ENCODE measurements at regions of chr19 and their contacts with region 1.

Region 1: DNA sequence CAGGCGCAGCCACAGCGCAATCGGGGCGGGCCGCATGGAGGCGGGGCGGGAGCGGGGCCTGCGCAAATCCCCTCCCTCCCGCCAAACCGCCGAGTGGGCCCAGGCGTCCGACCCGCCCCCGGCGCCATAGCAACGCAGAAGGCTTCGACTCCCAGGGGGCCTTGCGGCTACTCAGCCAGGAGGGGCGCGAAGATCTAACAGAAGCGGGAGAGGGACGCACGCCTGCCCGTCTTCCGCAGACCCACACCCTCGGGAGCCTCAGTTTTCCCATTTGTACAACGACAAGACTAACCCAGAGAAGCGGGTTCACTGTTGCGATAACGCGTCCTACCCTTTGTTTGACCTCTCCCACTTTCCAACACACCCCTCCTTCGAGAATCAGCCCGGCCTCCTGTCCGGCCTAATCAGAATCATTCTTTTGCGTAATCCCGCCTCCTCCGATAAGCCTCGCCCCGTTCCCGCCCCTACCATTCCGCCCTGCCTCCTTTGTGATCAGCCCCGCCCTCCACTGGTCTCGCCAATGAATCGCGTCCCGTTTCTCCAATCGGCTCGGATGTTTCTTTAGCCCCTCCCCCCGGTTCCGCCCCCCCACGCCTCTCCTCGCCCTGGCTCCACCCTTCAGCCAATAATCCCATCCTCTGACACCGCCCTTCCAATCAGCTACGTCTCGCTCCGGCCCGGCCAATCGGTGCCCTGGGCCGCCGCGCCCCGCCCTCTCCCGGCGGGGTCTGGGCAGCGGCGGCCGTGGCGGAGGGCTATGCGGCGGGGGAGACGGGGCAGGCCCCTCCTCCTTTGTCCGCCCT is at the start of gene PCSK4:
- DNase-seq: peak; percentile 99
- ATAC-seq: peak; percentile 94 to 95 (median 94)
- H3K4me3 ChIP-seq: peak within 1 kb of the TSS; percentile 73
- H3K27ac ChIP-seq: peak within 1 kb of the TSS; percentile 72
- H3K4me1 ChIP-seq: peaks cover 7% of the 10 kb centered on the region
- H3K27me3 ChIP-seq: no peaks in the 10 kb centered on the region
- CTCF ChIP-seq: no peak
- total RNA-seq, gene PCSK4: 0.57 to 1.5 (median 0.93) TPM

Region 2: DNA sequence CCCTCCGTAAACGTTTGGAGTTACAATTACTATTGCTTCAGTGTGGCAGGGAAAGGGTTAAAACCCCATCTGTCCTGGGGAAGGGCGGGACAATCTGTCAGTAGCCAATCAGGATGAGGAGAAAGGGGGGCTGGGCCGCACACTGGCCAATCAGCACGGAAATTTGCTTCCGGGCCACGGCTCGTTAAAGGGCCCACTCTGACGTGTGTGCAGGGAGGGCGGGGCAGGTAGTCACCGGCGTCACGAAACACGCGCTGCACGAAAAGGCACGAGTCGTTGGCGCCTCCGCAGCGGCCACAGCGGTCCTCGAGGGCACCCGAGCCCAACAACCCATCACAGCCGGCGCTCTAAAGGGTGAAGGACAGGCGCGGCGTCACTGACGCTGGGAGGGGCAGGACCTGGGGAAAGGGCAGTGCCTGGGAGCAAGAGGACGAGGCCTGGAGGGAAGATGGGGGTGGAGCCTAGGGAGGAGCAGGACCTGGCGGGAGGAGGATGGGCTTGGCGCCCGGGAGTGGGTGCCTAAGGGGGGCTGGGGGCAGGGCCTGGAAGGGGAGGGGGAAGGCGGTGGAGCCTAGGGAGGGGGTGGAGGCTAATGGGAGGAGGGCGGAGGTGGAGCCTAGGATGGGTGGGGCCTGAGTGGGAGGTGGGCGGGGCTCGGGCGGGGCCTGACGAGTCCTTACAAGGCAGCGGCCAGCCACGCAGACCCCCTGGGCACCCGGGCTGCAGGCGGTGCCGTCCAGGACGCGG is 17.4 kb after region 1 on chr19:
- intact Hi-C with region 1: loop called in 1 of 2 experiments (anchors 2 kb)
- DNase-seq: peak; percentile 91 to 94
- ATAC-seq: peak; percentile 88 to 92 (median 91)
- H3K4me3 ChIP-seq: peak overlapping the region; percentile 64
- H3K27ac ChIP-seq: peak overlapping the region; percentile 88
- H3K4me1 ChIP-seq: peaks cover 20% of the 10 kb centered on the region
- H3K27me3 ChIP-seq: peaks cover 0 to 4% (median 3%) of the 10 kb centered on the region in 3 donors
- CTCF ChIP-seq: no peak

Measured in psoas muscle (tissue), 8 donors.